Dendritic cell treated with granulocyte-macrophage colony-stimulating factor and Interleukin-4, amounts not matched to agents 40 ng/mL and 50 ng/mL, for 4 days (primary cell): ENCODE measurements at regions of chr9 and their contacts with region 1.

Region 1: GRCh38 chr9:75088260-75088905 is at the start of gene OSTF1:
- H3K4me3 Mint-ChIP-seq: peak within 1 kb of the TSS; percentile 80
- H3K27ac Mint-ChIP-seq: peak within 1 kb of the TSS; percentile 84
- H3K4me1 Mint-ChIP-seq: peaks cover 44% of the 10 kb centered on the region
- H3K27me3 Mint-ChIP-seq: no peaks in the 10 kb centered on the region

Region 2: DNA sequence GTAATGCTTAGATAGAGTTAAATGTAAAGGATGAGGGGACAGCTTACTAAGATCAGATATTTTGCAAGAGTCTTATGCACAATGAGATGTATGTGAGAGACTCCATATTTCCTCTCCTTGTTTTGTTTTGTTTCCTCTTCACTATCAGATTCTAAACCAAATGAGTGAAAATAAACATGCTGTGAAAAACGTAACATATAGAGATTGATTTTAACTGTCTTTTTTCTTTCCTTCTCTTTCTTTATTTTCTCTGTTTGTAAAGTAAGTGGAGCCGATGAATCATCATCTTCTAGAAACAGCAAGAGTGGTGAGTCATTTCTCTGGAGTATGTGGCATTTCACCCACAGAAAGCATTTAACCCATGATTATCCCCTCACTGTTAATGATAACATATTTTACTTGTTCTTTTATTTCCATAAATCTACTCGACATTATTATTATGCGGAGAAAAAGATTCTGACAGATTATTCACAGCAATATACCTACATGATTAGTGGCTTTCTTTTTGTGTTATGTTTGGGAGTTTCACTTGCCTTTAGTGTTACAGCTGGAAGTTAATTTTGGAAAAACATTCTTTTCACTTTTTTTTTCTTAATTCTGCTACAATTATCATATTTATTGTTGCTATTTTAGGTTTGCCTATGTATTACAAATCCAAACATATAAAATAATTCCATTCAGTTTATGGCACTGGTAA is 1938.9 kb before region 1 on chr9:
- intact Hi-C with region 1: loop called (anchors 5 kb)
- H3K4me3 Mint-ChIP-seq: peak overlapping the region; percentile 31
- H3K27ac Mint-ChIP-seq: peak overlapping the region; percentile 87
- H3K4me1 Mint-ChIP-seq: peaks cover 41% of the 10 kb centered on the region
- H3K27me3 Mint-ChIP-seq: no peaks in the 10 kb centered on the region

Region 3: GRCh38 chr9:73284377-73284776 is 1804.0 kb before region 1 on chr9:
- intact Hi-C with region 1: no loop called
- H3K4me3 Mint-ChIP-seq: no peak overlapping the region
- H3K27ac Mint-ChIP-seq: no peak overlapping the region
- H3K4me1 Mint-ChIP-seq: no peaks in the 10 kb centered on the region
- H3K27me3 Mint-ChIP-seq: no peaks in the 10 kb centered on the region

Region 4: DNA sequence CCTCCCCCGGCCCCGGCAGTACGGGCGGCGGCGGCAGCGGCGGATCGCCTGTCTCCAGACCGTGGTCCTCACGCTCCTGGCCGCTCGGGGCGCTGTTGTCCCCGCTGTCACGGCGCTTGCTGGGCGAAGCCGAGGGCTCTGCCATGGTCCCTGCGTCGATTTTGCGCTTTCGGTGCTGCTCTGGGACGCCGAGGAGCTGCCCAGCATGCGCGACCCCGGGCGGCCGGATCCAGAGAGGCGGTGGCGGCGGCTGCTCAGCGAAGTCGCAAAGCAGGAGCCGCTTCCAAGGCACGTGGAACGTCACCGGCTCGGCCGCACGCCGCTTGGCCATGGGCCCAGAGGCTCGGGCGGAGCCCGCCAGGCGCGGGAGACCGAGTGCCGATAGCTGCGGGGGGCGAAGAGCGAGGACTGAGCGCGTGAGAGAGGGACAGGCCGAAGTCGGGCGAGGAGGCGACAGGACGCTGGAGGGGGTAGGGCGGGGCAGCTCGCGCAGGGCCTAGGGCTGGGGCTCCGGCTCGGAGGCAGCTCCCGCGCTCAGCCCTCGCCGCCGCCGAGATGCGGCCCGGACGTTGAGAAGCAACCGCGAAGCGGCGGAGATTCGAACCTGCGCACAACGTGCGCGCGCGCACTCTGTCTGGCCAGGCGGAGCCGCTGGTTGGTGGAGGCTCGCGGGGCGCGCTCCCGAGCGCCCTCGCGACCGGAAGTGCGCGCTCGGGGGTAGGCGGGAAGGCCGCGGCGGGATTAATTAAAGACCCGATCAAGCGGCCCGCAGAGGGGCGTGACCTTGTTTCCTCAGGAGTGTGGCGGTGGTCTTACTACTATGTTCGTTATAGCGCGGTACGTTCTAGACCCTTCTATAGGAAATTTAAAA is 135.9 kb before region 1 on chr9 and contains the start of gene C9orf40:
- intact Hi-C with region 1: loop called (anchors 5 kb)
- H3K4me3 Mint-ChIP-seq: peak within 1 kb of the TSS; percentile 94
- H3K27ac Mint-ChIP-seq: peak within 1 kb of the TSS; percentile 98
- H3K4me1 Mint-ChIP-seq: peaks cover 8% of the 10 kb centered on the region
- H3K27me3 Mint-ChIP-seq: peaks cover 4% of the 10 kb centered on the region

Region 5: GRCh38 chr9:75027187-75028107 is 60.9 kb before region 1 on chr9:
- intact Hi-C with region 1: loop called (anchors 2 kb)
- H3K4me3 Mint-ChIP-seq: peak overlapping the region; percentile 96
- H3K27ac Mint-ChIP-seq: peak overlapping the region; percentile 85
- H3K4me1 Mint-ChIP-seq: peaks cover 18% of the 10 kb centered on the region
- H3K27me3 Mint-ChIP-seq: no peaks in the 10 kb centered on the region

Region 6: DNA sequence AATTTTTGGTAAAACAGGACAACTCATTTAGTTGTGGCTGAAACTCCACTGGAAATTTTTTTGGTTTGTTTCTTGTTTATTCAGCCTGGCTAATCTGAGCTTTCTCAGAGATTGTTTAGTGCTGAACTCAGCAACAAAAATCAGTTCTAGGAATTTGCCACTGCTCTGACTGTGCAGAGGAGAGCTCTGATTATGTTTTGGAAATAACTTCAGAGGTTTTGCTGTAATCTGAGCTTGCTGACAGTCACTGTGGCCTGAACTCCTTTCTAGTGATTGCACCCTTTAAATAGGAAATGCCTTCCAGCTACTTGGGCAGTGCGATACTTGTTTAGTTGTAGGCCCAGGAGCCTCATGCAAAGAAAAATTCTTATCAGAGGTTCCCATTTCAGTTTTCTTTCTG is 60.2 kb after region 1 on chr9:
- intact Hi-C with region 1: loop called (anchors 2 kb)
- H3K4me3 Mint-ChIP-seq: no peak overlapping the region
- H3K27ac Mint-ChIP-seq: peak overlapping the region; percentile 90
- H3K4me1 Mint-ChIP-seq: peaks cover 41% of the 10 kb centered on the region
- H3K27me3 Mint-ChIP-seq: no peaks in the 10 kb centered on the region

Region 7: DNA sequence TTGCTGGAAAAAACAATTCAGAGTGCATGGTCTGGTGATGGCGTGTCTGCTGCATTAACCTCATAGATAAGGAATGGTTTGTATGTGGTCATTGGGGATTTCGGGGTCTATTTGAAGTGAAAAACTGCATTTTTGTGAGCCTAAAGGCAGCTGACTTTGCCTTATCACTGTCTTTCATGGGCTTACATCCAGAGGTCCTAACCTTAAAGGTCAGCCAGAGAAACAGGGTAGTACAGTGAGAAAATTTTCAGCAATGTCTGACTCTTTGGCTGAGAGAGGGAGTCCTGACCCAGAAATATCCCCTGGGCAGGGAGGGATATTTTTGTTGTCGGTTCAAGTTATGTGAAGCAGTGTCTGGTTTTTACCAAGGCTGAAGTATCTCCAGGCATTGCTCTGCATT is 807.8 kb after region 1 on chr9:
- intact Hi-C with region 1: no loop called
- H3K4me3 Mint-ChIP-seq: no peak overlapping the region
- H3K27ac Mint-ChIP-seq: no peak overlapping the region
- H3K4me1 Mint-ChIP-seq: peaks cover 49% of the 10 kb centered on the region
- H3K27me3 Mint-ChIP-seq: peaks cover 13% of the 10 kb centered on the region